ENCODE measurements at regions of chr3 and their contacts with region 1.

Region 1: DNA sequence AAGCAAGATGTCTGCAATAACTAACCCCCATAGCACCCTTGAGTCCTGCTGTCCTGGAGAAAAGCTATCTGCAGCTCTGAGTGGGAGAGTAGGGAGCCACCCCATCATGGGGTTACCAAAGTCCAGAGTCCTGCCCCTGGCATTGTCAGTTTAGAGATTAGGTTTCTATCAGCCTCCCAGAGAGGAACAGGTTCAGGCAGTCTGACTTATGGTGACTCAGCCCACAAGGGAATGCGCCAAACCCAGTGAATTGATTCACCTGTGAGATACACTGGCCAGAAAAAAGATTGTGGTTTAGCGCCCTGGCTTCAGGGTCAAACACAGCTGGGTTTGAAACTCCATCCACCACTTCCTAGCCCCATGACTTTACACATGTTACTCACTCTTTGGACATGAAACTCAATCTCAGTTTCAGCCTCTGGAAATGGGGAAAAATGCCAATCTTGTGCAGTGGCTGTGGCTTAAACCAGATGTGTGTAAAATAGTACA is 263.6 kb upstream of the HES1 start:
- DNase-seq: peak; percentile 94
- H3K4me3 Mint-ChIP-seq: no peak overlapping the region
- H3K27ac Mint-ChIP-seq: peak overlapping the region; percentile 70
- H3K4me1 Mint-ChIP-seq: peaks cover 91% of the 10 kb centered on the region
- H3K27me3 Mint-ChIP-seq: no peaks in the 10 kb centered on the region
- CTCF ChIP-seq: no peak

Region 2: DNA sequence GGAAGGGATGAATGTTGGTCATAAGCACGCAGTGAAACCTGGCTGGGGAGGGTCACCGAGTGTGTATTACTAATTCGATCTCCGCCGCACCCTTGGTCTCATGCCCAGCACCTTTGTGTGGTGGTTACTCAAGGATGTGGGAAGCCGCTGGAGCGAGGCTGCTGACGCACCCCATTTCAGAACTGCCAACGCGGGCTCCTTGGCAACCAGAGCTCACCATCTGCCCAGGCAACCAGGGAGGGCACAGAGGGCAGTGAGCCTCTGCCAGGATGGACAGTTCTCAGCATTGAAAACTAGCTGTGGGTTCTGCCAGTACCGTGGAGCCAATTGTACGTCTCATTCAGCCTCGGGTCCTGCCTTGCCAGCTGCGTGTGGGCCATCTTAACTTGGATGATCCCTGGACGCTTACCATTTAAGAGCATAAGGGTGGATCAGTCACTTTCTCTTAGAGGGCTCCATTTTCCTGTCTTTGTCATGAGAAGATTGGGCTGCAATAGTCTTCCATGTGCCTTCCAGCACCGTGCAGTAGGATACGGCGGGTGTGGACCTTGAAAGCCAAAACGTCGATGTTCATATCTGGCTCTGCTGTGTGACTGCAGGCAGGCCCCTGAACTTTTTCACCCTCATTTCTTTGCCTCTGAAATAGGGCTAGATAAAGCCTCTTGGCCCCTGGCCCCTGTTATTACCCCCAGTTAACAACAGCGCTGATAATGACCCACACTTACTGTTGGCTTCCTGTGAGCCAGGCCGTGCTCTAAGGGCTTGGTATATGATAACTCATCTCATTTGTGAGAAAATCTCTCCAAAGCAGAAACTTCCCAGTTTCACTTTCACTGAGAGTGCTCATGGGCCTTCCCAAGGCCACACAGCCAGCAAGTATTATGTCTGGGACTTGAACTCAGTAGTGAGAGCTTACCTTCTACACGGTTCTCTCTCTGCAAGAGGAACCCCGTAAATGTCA is 40.5 kb before region 1 on chr3:
- CTCF ChIA-PET with region 1: interaction called, 3 read pairs
- intact Hi-C with region 1: loop called (anchors 5 kb)
- DNase-seq: peak; percentile 79
- H3K4me3 Mint-ChIP-seq: peak overlapping the region; percentile 11
- H3K27ac Mint-ChIP-seq: peak overlapping the region; percentile 90
- H3K4me1 Mint-ChIP-seq: peaks cover 98% of the 10 kb centered on the region
- H3K27me3 Mint-ChIP-seq: no peaks in the 10 kb centered on the region
- CTCF ChIP-seq: no peak

Region 3: GRCh38 chr3:193928354-193929209 is 56.3 kb after region 1 on chr3:
- CTCF ChIA-PET with region 1: interaction called, 6 read pairs
- intact Hi-C with region 1: loop called (anchors 5 kb)
- DNase-seq: peak; percentile 62
- H3K4me3 Mint-ChIP-seq: peak overlapping the region; percentile 20
- H3K27ac Mint-ChIP-seq: peak overlapping the region; percentile 82
- H3K4me1 Mint-ChIP-seq: peaks cover 29% of the 10 kb centered on the region
- H3K27me3 Mint-ChIP-seq: no peaks in the 10 kb centered on the region
- CTCF ChIP-seq: no peak

Region 4: GRCh38 chr3:193971261-193971751 is 99.0 kb after region 1 on chr3:
- CTCF ChIA-PET with region 1: interaction called, 4 read pairs
- intact Hi-C with region 1: loop called (anchors 1 kb)
- DNase-seq: peak; percentile 66
- H3K4me3 Mint-ChIP-seq: peak overlapping the region; percentile 56
- H3K27ac Mint-ChIP-seq: peak overlapping the region; percentile 29
- H3K4me1 Mint-ChIP-seq: peaks cover 60% of the 10 kb centered on the region
- H3K27me3 Mint-ChIP-seq: no peaks in the 10 kb centered on the region
- CTCF ChIP-seq: no peak

Region 5: DNA sequence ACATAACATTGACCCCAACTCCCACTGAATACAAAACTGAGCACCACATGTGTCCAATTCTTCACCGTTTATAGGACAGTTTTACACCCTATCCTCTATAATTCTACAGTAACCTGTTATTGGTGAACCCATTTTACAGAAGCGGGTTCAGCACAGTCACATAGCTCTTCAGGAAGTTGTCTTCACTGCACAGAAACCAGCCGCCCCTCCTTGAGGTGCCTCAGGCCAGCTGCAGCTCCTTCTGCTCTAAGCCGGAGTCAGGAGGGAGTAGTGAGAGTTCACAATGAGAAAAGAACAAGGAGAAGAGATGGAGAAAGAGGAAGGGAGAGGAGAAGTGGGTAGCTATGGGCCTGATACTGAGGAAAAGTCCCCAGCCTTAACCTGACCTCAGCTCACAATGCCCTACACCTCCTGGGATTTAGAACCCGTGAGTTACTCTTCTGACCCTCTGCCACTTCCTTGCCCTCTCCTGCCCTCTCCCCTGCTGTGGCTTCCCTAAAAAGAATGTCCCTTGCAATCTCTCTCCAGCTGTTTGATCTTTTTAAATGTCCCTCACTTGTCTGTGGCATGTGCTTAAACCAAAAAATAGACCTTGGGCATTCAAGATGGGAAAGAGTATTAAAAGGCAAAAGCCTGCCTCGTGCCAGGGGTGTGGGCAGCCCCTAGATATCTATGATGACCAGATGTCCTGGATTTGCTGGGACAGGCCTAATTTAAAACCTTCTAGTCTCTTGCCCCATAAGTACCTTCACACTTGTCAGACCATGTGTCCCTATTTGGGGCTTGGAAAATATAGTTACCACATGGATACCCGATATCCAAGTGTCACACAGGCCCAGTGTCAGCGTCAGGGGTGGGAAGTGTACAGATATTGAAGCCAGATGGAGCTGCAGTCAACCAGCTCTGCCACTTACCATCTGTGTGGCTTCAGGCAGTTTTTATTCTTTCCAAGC is 192.3 kb after region 1 on chr3:
- CTCF ChIA-PET with region 1: no interaction called
- intact Hi-C with region 1: loop called (anchors 5 kb)
- DNase-seq: no peak
- H3K4me3 Mint-ChIP-seq: no peak overlapping the region
- H3K27ac Mint-ChIP-seq: no peak overlapping the region
- H3K4me1 Mint-ChIP-seq: peaks cover 42% of the 10 kb centered on the region
- H3K27me3 Mint-ChIP-seq: no peaks in the 10 kb centered on the region
- CTCF ChIP-seq: no peak

Region 6: GRCh38 chr3:194323785-194324735 is 451.8 kb after region 1 on chr3:
- CTCF ChIA-PET with region 1: no interaction called
- intact Hi-C with region 1: loop called (anchors 5 kb)
- DNase-seq: peak; percentile 79
- H3K4me3 Mint-ChIP-seq: no peak overlapping the region
- H3K27ac Mint-ChIP-seq: no peak overlapping the region
- H3K4me1 Mint-ChIP-seq: peaks cover 35% of the 10 kb centered on the region
- H3K27me3 Mint-ChIP-seq: no peaks in the 10 kb centered on the region
- CTCF ChIP-seq: no peak

Measured in Calu3 (cell line).